Activated T-helper 2 cell treated with anti-CD3 and anti-CD28 coated beads, Interferon-gamma antibody, Interleukin-2, Interleukin-4, amounts not matched to agents 10 μg/mL and 5 μg/mL and 100 μg/mL, durations not matched to agents 14 hours and 24 hours and 36 hours (primary cell): ENCODE measurements at regions of chr18 and their contacts with region 1.

Region 1: DNA sequence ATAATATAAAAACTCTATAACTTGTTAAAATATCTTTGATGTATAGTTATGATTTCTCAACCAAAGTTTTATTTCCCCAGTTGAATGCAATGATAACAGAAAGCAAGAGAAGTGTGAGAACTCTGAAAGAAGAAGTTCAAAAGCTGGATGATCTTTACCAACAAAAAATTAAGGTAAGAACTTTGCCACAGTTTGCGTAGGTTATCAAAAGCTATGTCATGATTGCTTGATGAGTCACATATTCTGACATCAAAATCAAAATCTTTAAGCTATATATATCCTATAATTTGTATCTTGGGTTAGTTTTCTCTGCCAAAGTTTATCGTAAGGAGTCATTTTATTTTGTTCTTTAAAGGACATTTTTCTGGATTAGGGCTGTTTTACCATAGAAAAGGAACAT is 35.0 kb downstream of the NDC80 start:
- DNase-seq: no peak
- H3K4me3 Mint-ChIP-seq: peak overlapping the region; percentile 62
- H3K27ac Mint-ChIP-seq: peak overlapping the region; percentile 76
- H3K4me1 Mint-ChIP-seq: peaks cover 56% of the 10 kb centered on the region
- H3K27me3 Mint-ChIP-seq: no peaks in the 10 kb centered on the region

Region 2: DNA sequence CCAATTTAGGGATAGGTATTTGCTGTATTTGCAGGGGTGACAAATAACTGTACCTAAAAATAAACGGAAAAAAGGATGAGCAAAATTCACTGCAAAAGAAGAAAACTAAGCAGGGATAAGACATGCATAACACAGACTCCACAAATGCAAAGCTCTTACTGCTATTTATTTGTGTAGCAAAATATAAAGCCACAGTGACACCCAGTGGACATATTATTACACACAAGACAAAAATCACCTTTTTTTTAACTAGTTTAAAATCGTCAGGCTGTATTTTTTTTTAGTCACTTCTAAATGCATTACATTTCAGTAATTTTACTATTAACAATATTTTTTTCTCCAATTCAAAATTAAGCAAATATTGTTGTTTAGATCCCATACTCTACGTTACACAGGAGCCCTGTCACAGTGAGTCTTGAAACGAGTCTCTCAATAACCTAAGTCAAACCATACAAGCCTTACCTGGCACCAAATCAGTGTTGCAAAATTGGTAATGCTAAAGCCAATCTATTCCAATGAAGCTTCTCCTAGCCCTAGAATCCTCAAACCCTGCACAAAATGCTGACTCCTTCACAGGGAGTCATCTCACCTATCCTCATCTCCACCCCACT is 58.8 kb before region 1 on chr18:
- intact Hi-C with region 1: no loop called
- DNase-seq: no peak
- H3K4me3 Mint-ChIP-seq: no peak overlapping the region
- H3K27ac Mint-ChIP-seq: no peak overlapping the region
- H3K4me1 Mint-ChIP-seq: no peaks in the 10 kb centered on the region
- H3K27me3 Mint-ChIP-seq: no peaks in the 10 kb centered on the region

Region 3: GRCh38 chr18:2571200-2572143 is 34.9 kb before region 1 on chr18 and contains the starts of genes METTL4 and NDC80:
- intact Hi-C with region 1: loop called (anchors 2 kb)
- DNase-seq: peak; percentile 82
- H3K4me3 Mint-ChIP-seq: peak within 1 kb of the TSS; percentile 99
- H3K27ac Mint-ChIP-seq: peak within 1 kb of the TSS; percentile 98
- H3K4me1 Mint-ChIP-seq: peaks cover 52% of the 10 kb centered on the region
- H3K27me3 Mint-ChIP-seq: no peaks in the 10 kb centered on the region
- total RNA-seq, gene METTL4: 17.8 and 18.3 TPM in 2 replicates
- total RNA-seq, gene NDC80: 41.5 and 43.0 TPM in 2 replicates

Region 4: DNA sequence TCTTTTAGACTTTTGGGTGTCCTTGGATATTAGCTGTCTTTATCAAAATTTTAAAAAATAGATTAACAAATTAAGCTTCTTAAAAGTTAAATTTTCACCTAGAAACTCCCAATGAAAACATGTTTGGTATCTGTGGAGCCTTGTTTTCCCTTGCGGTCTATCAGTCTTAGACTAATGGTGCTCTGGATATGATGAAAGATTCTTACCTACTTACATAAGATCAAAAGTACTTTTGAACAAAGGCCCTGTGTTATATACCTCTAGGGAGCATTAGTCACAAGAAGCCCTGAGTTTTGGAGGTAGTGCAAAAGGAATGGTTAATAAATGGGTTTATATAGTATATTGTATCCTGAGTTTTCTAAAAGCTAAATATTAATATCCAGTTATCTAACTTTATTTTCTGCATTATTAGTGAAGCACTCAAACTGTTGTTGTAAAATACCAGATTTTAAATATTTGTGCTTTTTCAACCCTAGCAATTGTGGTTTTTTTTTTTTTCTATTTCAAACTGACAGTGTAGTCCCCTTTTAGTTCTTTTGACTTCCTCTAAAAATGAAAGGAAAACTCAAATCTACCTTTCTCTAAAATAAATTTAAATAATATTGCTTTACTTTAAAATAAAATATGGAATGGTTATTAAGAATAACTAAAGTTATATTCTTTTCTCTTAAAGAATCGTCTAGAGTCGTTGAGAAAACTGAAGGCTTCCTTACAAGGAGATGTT is 16.8 kb before region 1 on chr18:
- intact Hi-C with region 1: loop called (anchors 2 kb)
- DNase-seq: no peak
- H3K4me3 Mint-ChIP-seq: peak overlapping the region; percentile 58
- H3K27ac Mint-ChIP-seq: peak overlapping the region; percentile 84
- H3K4me1 Mint-ChIP-seq: peaks cover 43% of the 10 kb centered on the region
- H3K27me3 Mint-ChIP-seq: no peaks in the 10 kb centered on the region

Region 5: DNA sequence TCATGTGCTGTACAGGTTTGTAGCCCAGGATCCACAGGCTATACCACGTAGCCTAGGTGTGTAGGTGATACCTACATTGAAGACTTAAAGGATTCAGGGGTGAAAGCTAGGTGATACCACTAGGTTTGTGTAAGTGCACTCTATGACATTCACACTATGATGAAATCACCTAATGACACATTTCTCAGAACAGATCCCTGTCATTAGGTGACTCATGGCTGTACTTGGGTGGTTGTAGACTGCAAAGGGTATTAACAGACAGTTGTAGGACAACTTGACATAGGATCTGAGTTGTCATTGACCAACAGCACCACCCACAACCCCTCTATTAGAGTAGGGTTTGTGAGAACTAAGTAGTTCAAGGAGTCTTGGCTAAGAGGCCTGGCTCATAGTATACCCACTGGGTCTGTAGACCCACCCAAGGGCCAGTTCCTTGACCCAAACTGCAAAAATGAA is 21.5 kb after region 1 on chr18:
- intact Hi-C with region 1: loop called (anchors 1 kb)
- DNase-seq: no peak
- H3K4me3 Mint-ChIP-seq: no peak overlapping the region
- H3K27ac Mint-ChIP-seq: peak overlapping the region; percentile 39
- H3K4me1 Mint-ChIP-seq: peaks cover 19% of the 10 kb centered on the region
- H3K27me3 Mint-ChIP-seq: no peaks in the 10 kb centered on the region

Region 6: DNA sequence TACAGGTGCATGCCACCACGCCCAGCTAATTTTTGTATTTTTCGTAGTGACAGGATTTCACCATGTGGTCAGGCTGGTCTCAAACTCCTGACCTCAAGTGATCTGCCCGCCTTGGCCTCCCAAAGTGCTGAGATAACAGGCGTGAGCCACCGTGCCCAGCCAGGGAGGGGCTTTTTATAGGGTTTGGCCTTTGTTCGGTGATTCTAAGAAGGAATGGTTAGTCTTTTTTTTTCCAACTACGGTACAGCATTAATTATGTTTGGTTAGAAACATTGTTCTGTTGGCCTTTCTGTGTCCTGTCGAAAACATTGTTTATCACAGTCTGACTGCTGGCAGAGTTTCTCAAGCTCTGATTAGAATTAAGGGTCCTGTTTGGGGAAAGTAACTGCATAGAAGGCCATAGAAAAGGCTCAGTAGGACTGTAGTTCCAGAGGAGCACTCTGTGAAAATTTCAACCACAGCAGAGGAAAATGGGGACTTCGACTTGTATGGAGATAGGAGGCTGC is 29.8 kb after region 1 on chr18:
- intact Hi-C with region 1: loop called (anchors 2 kb)
- DNase-seq: no peak
- H3K4me3 Mint-ChIP-seq: peak overlapping the region; percentile 74
- H3K27ac Mint-ChIP-seq: peak overlapping the region; percentile 99
- H3K4me1 Mint-ChIP-seq: peaks cover 62% of the 10 kb centered on the region
- H3K27me3 Mint-ChIP-seq: no peaks in the 10 kb centered on the region

Region 7: DNA sequence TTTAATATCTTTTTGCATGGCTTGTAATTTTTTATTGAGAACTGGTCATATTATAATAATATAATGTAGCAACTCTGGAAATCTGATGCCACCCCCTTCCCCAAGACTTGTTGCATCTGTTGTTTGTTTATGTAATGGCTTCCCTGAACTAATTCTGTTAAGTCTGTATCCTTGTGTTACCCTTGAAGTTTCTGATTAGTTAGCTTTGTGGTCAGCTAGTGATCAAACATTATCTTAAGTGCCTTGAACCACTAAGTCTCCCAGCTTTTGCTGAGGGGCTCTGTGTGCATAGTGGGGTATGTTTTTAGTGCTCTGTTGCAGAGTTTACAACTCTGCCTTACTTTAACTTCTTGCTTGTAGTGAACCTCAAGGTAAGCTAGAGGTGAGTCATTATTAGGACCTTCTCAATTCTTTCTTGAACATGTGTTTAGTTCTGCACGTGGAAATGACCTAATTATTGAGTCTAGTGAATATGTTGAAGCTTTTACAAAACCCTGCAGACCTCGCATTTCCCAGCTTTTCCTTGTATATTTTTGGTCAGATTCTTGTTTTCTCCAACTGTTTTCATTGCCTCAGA is 74.0 kb after region 1 on chr18:
- intact Hi-C with region 1: loop called (anchors 5 kb)
- DNase-seq: no peak
- H3K4me3 Mint-ChIP-seq: no peak overlapping the region
- H3K27ac Mint-ChIP-seq: peak overlapping the region; percentile 34
- H3K4me1 Mint-ChIP-seq: peaks cover 43% of the 10 kb centered on the region
- H3K27me3 Mint-ChIP-seq: no peaks in the 10 kb centered on the region